Activated B cell treated with CpG ODN at 0.5 μM for 24 hours (primary cell): ENCODE measurements at regions of chr12 and their contacts with region 1.

Region 1: DNA sequence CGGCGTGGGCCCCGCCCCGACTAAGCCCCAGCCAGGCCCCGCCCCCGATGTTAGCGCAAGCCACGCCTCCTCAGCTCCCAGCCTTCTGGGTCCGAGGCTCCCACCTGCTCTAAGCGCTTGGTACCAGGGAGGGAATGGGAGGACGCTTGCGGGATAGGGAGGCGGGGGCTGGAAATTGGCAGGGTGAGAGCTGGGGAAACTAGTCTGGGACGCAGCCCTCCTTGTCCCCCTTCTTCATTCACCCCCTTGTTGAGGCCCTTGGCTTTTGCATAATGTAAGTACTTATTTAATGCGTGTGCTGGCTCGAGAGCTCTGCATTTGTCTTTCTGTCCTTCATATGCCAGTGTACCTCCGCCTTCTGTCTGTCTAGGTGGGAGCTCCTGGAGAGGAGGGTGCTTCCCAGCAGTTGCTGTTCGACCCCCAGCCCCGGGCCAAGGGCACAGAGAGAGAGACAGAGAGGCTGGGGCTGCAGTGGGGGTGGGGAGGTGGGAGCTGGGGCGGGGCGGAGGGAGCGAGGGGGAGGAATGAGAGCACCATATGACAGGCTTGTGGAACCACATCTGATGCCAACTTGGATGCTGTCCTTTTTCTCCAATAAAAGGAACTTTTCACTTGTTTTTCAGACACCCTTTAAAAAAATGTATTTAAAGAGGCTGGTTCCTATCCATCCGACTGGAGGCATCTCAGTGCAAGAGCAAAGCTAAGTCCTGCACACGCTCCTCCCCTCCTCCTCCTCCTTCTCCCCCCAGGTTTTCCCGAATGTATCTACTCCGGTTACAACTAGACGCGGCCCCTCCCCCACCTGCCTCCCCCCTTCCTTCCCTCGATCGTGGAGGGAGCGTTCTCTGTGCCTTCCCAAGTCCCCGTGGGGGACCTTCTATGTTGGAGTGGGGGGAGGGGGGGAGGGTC is 25.6 kb upstream of the MAP1LC3B2 start:
- DNase-seq: peak; percentile 82
- ATAC-seq: peak; percentile 88
- H3K4me3 Mint-ChIP-seq: peak overlapping the region; percentile 96
- H3K27ac Mint-ChIP-seq: peak overlapping the region; percentile 68
- H3K4me1 Mint-ChIP-seq: peaks cover 53% of the 10 kb centered on the region
- H3K27me3 Mint-ChIP-seq: no peaks in the 10 kb centered on the region
- CTCF ChIP-seq: no peak

Region 2: DNA sequence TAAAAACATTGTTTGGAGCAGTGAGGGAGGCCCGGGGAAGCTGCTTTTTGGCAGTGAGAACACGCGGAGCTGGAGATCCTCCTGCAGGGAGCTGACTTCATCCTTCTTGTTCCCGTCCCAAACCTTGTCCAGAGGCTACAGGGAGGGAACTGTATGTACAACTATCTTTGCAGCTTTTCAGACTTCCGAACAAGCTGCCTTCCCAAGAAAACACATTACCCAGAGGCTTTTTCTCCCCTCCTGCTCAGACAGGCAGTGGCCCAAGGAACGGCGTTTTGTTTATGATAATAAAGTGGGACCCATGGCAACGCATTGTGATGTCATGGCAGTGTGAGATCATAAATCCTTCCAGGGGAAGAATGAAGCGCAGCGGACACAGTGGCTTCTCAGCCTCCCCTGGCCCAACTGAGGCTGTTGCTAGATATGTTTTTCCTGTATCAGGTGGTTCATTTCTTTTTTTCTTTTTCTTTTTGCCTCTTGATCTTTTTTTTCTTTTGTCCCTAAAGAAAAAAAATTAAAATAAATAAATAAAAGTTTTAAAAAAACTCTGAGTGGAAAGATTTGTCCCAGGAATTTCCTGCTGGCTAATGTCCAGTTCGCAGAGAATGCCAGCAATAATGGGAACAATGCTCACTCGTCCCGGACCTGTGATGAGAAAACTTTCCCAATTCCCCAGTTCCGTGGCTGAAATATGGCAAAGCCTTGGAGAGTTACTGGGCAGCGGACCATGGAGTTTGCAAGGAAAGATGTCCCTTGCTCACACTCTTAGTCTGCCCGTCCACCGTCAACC is 77.9 kb before region 1 on chr12:
- CTCF ChIA-PET with region 1: no interaction called
- POLR2A ChIA-PET with region 1: no interaction called
- intact Hi-C with region 1: loop called (anchors 1 kb)
- DNase-seq: no peak
- ATAC-seq: no peak
- H3K4me3 Mint-ChIP-seq: no peak overlapping the region
- H3K27ac Mint-ChIP-seq: no peak overlapping the region
- H3K4me1 Mint-ChIP-seq: peaks cover 38% of the 10 kb centered on the region
- H3K27me3 Mint-ChIP-seq: no peaks in the 10 kb centered on the region
- CTCF ChIP-seq: no peak

Region 3: GRCh38 chr12:116495274-116495673 is 38.3 kb before region 1 on chr12:
- CTCF ChIA-PET with region 1: no interaction called
- POLR2A ChIA-PET with region 1: interaction called, 10 read pairs
- intact Hi-C with region 1: no loop called
- DNase-seq: no peak
- ATAC-seq: no peak
- H3K4me3 Mint-ChIP-seq: no peak overlapping the region
- H3K27ac Mint-ChIP-seq: no peak overlapping the region
- H3K4me1 Mint-ChIP-seq: no peaks in the 10 kb centered on the region
- H3K27me3 Mint-ChIP-seq: no peaks in the 10 kb centered on the region
- CTCF ChIP-seq: no peak

Region 4: DNA sequence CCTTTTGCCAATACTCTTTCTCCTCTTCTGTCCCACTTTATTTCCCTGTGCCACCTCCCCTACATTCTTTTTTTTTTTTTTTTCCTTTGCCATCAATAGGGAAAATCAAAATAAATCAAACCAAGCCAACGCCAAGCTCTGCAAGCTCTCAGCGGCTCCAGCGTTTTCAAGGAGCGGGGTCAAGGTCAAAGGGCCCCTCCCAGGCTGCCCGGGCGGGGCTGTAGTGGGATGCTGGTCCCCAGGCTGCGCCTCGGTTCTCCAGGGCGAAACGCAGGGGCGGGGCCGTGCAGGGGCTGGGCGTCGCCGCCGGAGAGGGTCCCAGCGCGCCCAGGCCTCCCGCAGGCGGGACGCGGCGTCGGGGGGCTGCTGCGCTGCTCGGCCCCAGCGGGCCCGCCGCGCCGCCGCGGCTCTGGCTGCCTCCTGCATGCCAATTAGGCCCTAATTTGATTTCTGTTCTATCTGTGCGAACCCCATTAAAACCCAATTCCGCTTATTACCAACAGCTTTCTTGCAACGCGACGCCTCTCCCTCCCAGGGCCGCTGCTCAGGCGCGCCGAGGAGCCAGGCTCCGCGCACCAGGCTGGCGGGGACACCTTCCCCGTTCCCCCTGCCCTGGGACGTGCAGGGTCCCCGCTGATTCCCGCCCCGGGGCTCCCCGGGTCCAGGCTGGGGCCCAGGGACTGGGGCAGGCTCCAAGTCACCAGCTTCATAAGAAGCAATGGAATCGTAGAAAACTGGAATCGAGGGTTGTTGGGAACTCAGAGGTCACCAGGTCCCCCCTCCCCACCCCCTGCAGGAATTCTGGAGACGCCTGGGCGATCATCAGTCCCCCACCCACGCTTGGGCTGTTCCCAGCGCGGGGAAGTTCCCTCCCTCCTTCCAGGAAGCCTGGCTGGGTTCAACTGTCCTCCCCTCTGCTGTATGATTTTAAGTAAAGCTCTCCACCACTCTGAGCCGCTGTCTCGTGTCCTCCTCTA is 25.2 kb before region 1 on chr12:
- CTCF ChIA-PET with region 1: no interaction called
- POLR2A ChIA-PET with region 1: interaction called, 3 read pairs
- intact Hi-C with region 1: loop called (anchors 1 kb)
- DNase-seq: peak; percentile 57
- ATAC-seq: peak; percentile 94
- H3K4me3 Mint-ChIP-seq: peak overlapping the region; percentile 80
- H3K27ac Mint-ChIP-seq: no peak overlapping the region
- H3K4me1 Mint-ChIP-seq: peaks cover 8% of the 10 kb centered on the region
- H3K27me3 Mint-ChIP-seq: no peaks in the 10 kb centered on the region
- CTCF ChIP-seq: no peak

Region 5: DNA sequence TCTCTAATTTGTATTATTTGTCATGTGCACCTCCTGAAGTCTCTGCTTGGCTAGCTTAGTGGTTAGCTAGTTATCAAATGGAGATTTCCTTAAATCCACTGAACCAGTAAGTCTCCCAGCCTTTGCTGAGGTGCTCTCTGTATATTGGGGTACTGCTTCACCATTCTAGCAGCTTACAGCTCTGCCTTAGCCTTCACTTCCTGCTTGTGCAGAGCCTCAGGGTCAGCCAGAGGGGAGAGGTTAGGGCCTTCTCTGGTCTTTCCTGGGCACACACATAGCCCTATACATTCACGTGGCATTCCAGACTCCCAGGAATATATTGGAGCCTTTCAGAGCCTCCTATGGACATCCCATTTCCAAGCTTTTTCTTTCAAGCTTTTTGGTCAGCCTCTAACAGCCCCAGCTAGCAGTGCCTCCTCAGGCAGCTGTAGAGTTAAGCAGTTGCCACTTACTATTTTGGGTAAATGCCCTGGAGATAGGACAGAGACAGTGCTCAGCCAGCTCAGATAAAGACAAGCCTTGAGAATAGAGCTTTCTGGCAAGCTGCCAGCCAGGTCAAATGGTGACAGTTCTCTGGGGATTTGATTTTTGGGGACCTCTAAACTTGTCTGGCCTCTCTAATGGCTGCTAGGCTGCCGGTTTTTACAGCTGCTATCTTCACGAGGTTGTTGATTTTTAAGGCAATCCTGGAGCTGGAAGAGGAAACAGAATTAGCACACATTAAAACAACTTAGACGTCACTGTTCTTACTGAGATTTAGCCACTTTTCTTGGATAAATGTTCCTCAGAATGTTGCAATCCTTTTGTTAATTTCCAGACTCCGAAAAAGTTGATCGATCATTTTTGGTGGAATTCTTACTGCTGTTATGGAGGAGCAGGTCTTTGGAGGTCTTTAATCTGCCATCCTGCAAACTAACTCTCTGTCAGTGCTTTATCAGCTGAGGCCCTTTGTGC is 410.1 kb after region 1 on chr12:
- CTCF ChIA-PET with region 1: no interaction called
- POLR2A ChIA-PET with region 1: no interaction called
- intact Hi-C with region 1: no loop called
- DNase-seq: no peak
- ATAC-seq: no peak
- H3K4me3 Mint-ChIP-seq: no peak overlapping the region
- H3K27ac Mint-ChIP-seq: no peak overlapping the region
- H3K4me1 Mint-ChIP-seq: peaks cover 3% of the 10 kb centered on the region
- H3K27me3 Mint-ChIP-seq: no peaks in the 10 kb centered on the region
- CTCF ChIP-seq: no peak